ENCODE measurements at regions of chr5 and their contacts with region 1.

Region 1: GRCh38 chr5:145825751-145826180 is 9.4 kb downstream of the PRELID2 start:
- DNase-seq: no peak
- H3K4me3 ChIP-seq: no peak overlapping the region
- H3K27ac ChIP-seq: no peak overlapping the region
- H3K4me1 ChIP-seq: no peaks in the 10 kb centered on the region
- H3K27me3 ChIP-seq: no peaks in the 10 kb centered on the region; a peak in 1 of 7 replicates
- CTCF ChIP-seq: peak in 2 of 3 experiments; percentile 65 to 89; a peak in 3 of 4 replicates
- EP300 ChIP-seq: no peak
- POLR2A ChIP-seq: no peak
- RAD21 ChIP-seq: peak; percentile 67 to 72

Region 2: DNA sequence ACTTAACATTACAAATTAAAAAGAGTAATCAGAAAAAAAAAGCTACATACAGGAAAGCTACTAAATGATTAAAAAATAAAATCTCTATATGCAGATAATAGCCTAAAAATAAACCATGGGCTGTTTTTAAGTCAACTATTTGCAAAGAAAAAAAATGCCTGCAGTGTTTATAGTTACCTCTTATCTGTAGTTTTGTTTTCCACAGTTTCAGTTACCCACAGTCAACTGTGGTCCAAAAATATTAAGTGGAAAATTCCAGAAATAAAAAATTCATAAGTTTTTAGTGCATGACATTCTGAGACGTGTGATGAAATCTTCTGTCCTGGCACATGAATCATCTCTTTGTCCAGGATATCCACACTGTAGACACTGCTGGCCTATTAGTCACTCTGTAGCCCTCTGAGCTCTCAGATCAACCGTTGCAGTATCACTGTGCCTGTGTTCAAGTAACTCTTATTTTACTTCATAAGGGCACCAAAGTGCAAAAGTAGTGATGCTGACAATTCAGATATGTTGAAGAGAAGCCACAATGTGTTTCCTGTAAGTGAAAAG is 49.8 kb before region 1 on chr5:
- CTCF ChIA-PET with region 1: interaction called, 12 read pairs
- POLR2A ChIA-PET with region 1: no interaction called
- DNase-seq: no peak
- H3K4me3 ChIP-seq: no peak overlapping the region
- H3K27ac ChIP-seq: no peak overlapping the region
- H3K4me1 ChIP-seq: peaks cover 0 to 2% (median 0%) of the 10 kb centered on the region in 4 experiments; a peak in 2 of 7 replicates
- H3K27me3 ChIP-seq: no peaks in the 10 kb centered on the region
- CTCF ChIP-seq: no peak
- EP300 ChIP-seq: no peak
- POLR2A ChIP-seq: no peak
- RAD21 ChIP-seq: no peak

Region 3: DNA sequence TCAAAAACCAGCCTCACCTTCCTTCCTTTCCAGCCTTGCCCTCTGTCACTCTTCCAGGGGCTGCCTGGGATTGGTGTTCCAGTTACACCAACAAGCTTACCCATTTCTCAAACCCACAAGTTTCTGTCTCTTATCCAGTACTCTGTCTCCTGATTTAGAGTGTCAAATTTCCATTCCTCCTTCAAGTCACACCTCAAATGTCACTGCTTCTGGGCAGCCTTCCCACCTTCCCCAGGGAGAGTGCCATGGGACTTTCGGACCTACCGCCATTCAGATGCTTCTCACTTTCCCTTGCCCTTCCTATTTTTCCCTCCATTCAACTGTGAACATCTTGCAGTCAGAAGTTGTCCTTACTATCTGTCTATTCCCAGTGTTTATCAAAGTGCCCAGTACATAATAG is 49.0 kb after region 1 on chr5:
- CTCF ChIA-PET with region 1: no interaction called
- POLR2A ChIA-PET with region 1: no interaction called
- DNase-seq: no peak
- H3K4me3 ChIP-seq: no peak overlapping the region
- H3K27ac ChIP-seq: no peak overlapping the region
- H3K4me1 ChIP-seq: no peaks in the 10 kb centered on the region
- H3K27me3 ChIP-seq: no peaks in the 10 kb centered on the region
- CTCF ChIP-seq: no peak
- EP300 ChIP-seq: no peak
- POLR2A ChIP-seq: no peak
- RAD21 ChIP-seq: no peak